Activated CD4-positive, alpha-beta memory T cell treated with anti-CD3 and anti-CD28 coated beads for 36 hours (primary cell): ENCODE measurements at regions of chr6 and their contacts with region 1.

Region 1: DNA sequence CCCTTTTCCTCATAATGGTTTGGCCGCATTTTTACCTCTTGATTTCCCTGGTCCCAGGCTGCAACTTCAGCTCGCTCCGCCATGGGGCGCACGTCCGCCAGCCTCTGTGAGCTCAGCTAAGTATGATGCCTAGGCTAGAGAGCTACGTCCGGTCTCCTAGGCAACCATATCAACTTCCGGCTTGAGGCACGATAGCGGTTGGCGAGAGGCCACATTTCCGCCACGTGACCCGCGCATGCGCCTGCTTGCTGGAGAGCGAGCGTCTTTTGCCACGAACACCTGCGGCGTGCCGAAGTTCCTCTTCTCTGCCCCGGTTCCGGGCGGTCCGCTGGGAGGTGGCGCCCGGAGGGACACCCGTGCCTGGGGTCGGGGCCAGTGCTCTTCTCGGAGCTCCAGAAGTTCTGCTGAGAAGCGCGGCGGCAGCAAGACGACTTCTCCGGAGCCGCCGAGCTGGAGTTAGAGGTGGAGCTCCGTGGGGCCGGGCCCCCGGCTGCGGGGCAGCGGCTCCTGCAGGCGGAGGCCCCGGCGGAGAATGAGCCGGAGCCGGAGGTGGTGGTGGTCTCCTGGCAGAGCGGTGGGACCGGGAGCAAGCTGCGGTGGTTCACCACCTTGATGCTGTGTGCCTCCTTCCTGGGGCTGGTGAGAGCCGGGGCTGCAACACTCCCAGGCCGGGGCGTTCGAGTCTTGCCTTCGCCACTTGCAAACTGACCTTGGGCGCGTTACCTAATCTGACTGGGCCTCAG is 172.0 kb downstream of the SLC16A10 start:
- DNase-seq: peak; percentile 99
- H3K4me3 Mint-ChIP-seq: peak overlapping the region; percentile 76
- H3K27ac Mint-ChIP-seq: peak overlapping the region; percentile 79
- H3K4me1 Mint-ChIP-seq: peaks cover 31% of the 10 kb centered on the region
- H3K27me3 Mint-ChIP-seq: peaks cover 2% of the 10 kb centered on the region

Region 2: GRCh38 chr6:111291336-111292259 is 32.3 kb after region 1 on chr6:
- CTCF ChIA-PET with region 1: interaction called, 3 read pairs
- POLR2A ChIA-PET with region 1: no interaction called
- intact Hi-C with region 1: loop called (anchors 5 kb)
- DNase-seq: no peak
- H3K4me3 Mint-ChIP-seq: no peak overlapping the region
- H3K27ac Mint-ChIP-seq: no peak overlapping the region
- H3K4me1 Mint-ChIP-seq: peaks cover 30% of the 10 kb centered on the region
- H3K27me3 Mint-ChIP-seq: no peaks in the 10 kb centered on the region

Region 3: DNA sequence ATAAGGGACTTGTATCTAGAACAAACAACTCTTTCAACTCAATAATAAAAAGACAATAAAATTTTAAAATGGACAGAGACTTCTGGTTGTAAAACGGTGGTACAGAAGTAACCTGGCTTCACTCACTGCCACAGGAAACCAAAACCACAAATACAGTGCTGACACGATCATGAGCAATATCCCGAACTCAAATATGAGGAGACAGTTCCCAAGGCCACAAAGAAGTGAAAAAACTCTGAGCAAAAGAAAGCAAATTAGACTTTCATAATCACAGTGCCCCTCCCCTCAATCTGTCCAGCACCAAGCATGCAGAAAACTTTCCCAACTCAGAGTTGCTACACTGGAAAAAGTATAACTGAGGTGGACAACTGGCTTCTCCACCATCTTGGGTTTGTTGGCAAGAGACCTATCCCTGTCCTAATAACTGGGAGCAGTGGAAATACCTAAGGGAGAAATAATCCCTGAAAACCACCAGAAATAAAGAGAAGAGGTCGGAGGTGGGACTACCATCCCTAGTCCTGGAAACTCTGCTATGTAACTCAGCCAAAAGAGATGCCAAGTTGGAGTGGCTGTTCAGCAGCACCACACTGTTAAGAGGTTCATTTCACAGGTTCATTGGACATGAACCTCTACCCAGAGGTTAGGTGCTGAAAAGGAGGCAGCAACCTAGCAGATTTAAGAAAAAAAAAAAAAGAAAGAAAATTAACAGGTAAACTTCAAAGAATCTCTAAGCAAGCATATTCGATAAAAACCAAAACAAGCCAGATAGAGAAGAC is 168.3 kb after region 1 on chr6:
- CTCF ChIA-PET with region 1: no interaction called
- POLR2A ChIA-PET with region 1: no interaction called
- intact Hi-C with region 1: no loop called
- DNase-seq: peak; percentile 44
- H3K4me3 Mint-ChIP-seq: no peak overlapping the region
- H3K27ac Mint-ChIP-seq: peak overlapping the region; percentile 10
- H3K4me1 Mint-ChIP-seq: peaks cover 51% of the 10 kb centered on the region
- H3K27me3 Mint-ChIP-seq: no peaks in the 10 kb centered on the region

Region 4: GRCh38 chr6:111533087-111533784 is 274.0 kb after region 1 on chr6:
- CTCF ChIA-PET with region 1: interaction called, 3 read pairs
- POLR2A ChIA-PET with region 1: no interaction called
- intact Hi-C with region 1: loop called (anchors 1 kb)
- DNase-seq: peak; percentile 71
- H3K4me3 Mint-ChIP-seq: no peak overlapping the region
- H3K27ac Mint-ChIP-seq: peak overlapping the region; percentile 6
- H3K4me1 Mint-ChIP-seq: peaks cover 26% of the 10 kb centered on the region
- H3K27me3 Mint-ChIP-seq: no peaks in the 10 kb centered on the region

Region 5: GRCh38 chr6:111605100-111605751 is 346.0 kb after region 1 on chr6:
- CTCF ChIA-PET with region 1: interaction called, 20 read pairs
- POLR2A ChIA-PET with region 1: interaction called, 13 read pairs
- intact Hi-C with region 1: loop called (anchors 1 kb)
- DNase-seq: peak; percentile 43
- H3K4me3 Mint-ChIP-seq: peak overlapping the region; percentile 81
- H3K27ac Mint-ChIP-seq: peak overlapping the region; percentile 93
- H3K4me1 Mint-ChIP-seq: peaks cover 48% of the 10 kb centered on the region
- H3K27me3 Mint-ChIP-seq: no peaks in the 10 kb centered on the region

Region 6: DNA sequence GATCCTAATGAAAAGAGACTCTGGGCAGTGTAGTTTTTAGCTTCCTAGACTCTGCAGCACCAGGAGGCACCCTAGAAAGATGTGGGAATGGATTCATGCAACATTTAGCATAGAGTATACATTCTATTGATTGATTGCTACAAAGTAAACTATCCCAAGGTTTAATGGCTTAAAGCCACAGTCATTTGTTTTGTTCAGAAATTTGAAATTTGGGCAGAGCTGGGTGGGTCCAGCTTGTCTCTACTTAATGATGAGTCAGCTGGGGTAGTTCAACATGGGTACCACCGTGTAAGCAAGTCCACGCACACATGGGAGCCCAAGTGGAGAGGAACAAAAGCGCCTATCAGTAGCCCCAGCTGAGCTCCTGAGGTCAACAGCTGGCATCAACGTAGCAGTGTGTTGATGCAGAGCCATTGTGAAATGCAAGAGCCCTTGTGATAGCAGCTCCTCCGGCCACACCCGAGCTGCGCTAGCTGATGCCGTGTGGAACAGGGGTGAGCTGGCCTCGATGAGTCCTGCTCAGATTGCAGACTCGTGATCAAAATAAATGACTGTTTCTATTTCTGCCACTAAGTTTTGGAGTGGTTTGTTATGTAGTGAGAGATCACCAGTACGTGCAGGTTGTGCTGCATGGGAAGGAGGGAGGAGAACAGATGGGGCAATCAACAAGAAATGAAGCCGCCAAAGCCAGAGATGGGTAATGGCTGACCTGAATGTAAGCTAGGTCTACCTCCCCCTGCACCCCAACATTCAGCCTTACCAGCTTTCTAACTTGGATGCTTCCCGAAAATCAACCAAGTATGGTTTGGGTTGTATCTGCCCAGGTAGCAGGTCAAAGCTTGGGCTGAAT is 392.1 kb after region 1 on chr6:
- CTCF ChIA-PET with region 1: interaction called, 12 read pairs
- POLR2A ChIA-PET with region 1: no interaction called
- intact Hi-C with region 1: no loop called
- DNase-seq: no peak
- H3K4me3 Mint-ChIP-seq: no peak overlapping the region
- H3K27ac Mint-ChIP-seq: no peak overlapping the region
- H3K4me1 Mint-ChIP-seq: no peaks in the 10 kb centered on the region
- H3K27me3 Mint-ChIP-seq: no peaks in the 10 kb centered on the region

Region 7: DNA sequence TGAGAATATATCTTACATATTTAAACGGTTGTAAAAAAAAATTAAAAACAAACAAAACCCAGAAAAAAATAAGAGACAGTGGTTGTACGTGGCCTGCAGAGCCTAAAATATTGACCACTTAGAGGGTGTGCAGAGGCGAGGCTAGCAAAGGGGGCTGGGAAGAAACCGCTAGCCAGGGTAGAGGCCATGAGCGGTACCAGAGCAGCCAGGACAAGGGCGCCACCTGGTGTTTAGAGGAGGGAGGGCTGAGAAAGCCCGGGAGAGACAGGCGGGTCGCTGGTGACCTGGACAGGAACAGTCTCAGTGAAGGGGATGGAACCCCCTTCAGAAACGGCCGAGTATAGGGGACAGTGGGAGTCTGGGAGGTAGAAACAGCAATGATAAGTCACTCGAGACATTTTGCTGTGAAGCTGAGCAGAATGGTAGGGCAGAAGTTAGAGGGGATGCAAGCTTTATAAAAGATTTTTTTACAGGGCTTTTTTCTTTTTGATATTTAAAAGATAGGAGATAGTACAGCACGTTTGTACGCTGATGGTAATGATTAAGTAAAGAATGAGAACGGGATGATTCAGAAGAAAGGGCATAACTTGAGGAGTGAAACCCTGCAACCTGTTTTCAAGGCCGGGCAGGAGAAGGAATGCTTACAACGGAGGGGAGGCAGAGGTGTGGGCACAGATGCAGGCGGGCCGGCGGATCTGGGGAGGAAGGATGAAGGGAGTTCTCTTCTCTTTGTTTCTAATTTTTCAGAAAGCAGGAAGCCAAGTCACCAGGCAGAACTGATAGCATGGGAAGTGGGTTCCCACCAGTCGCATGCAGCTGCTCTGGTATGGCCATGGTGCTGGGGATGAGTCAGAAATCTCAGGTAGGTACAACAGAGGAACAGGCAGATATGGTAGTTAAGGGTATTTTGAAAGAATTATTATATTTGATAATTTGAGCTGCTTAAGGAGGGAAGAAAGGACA is 904.3 kb after region 1 on chr6:
- CTCF ChIA-PET with region 1: interaction called, 16 read pairs
- POLR2A ChIA-PET with region 1: no interaction called
- intact Hi-C with region 1: loop called (anchors 2 kb)
- DNase-seq: peak; percentile 88
- H3K4me3 Mint-ChIP-seq: peak overlapping the region; percentile 36
- H3K27ac Mint-ChIP-seq: no peak overlapping the region
- H3K4me1 Mint-ChIP-seq: peaks cover 16% of the 10 kb centered on the region
- H3K27me3 Mint-ChIP-seq: peaks cover 43% of the 10 kb centered on the region